Activated naive CD4-positive, alpha-beta T cell treated with anti-CD3 and anti-CD28 coated beads, Interleukin-2, amount 10 ng/mL, durations not matched to agents 7 days and 5 days (primary cell): ENCODE measurements at regions of chr4 and their contacts with region 1.

Region 1: GRCh38 chr4:86895692-86896488 is 3.7 kb upstream of the C4orf36 start:
- DNase-seq: no peak
- H3K4me3 Mint-ChIP-seq: no peak overlapping the region
- H3K27ac Mint-ChIP-seq: no peak overlapping the region
- H3K4me1 Mint-ChIP-seq: peaks cover 10% of the 10 kb centered on the region
- H3K27me3 Mint-ChIP-seq: peaks cover 24% of the 10 kb centered on the region

Region 2: GRCh38 chr4:86497980-86498862 is 397.7 kb before region 1 on chr4:
- CTCF ChIA-PET with region 1: interaction called, 33 read pairs
- DNase-seq: no peak
- H3K4me3 Mint-ChIP-seq: no peak overlapping the region
- H3K27ac Mint-ChIP-seq: no peak overlapping the region
- H3K4me1 Mint-ChIP-seq: peaks cover 9% of the 10 kb centered on the region
- H3K27me3 Mint-ChIP-seq: peaks cover 4% of the 10 kb centered on the region

Region 3: DNA sequence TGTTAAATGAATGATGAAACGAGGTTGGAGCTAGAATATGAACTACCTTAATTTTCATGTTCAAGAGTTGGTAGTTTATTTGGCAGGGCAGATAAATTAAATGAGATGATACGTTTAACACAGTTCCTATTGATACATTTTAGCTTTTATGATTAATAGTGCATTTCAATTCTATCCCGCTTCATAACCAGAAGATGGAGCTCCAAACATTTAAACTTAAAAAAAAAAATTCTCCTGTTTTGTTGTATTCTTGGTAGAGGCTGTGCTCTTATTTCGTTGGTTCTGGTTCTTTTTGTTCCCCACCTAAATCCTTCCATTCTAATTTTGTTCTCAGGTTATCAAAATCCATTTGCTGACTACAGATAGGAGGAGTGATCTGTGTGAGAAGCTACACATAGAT is 373.5 kb before region 1 on chr4:
- CTCF ChIA-PET with region 1: interaction called, 12 read pairs
- DNase-seq: no peak
- H3K4me3 Mint-ChIP-seq: no peak overlapping the region
- H3K27ac Mint-ChIP-seq: no peak overlapping the region
- H3K4me1 Mint-ChIP-seq: no peaks in the 10 kb centered on the region
- H3K27me3 Mint-ChIP-seq: peaks cover 19% of the 10 kb centered on the region

Region 4: DNA sequence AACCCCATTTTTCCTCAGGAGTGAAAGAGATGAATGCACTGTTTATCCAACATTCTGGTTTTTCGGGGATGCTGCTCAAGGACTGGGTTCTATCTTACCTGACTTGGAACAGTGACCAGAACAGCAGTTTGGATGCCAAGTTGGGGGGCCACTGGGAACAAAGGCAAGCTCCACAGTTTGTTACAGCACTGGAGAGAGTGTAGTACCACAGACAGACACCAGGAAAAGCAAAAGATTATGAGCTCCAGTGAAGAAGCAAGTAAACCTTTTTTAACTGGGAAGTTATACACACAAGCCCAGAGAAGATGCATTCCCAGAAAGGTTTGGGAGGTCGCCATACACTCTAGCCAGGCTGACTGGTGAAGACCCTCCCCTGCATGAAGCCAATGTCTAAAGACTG is 17.2 kb before region 1 on chr4:
- CTCF ChIA-PET with region 1: no interaction called
- DNase-seq: no peak
- H3K4me3 Mint-ChIP-seq: no peak overlapping the region
- H3K27ac Mint-ChIP-seq: no peak overlapping the region
- H3K4me1 Mint-ChIP-seq: no peaks in the 10 kb centered on the region
- H3K27me3 Mint-ChIP-seq: peaks cover 4% of the 10 kb centered on the region

Region 5: DNA sequence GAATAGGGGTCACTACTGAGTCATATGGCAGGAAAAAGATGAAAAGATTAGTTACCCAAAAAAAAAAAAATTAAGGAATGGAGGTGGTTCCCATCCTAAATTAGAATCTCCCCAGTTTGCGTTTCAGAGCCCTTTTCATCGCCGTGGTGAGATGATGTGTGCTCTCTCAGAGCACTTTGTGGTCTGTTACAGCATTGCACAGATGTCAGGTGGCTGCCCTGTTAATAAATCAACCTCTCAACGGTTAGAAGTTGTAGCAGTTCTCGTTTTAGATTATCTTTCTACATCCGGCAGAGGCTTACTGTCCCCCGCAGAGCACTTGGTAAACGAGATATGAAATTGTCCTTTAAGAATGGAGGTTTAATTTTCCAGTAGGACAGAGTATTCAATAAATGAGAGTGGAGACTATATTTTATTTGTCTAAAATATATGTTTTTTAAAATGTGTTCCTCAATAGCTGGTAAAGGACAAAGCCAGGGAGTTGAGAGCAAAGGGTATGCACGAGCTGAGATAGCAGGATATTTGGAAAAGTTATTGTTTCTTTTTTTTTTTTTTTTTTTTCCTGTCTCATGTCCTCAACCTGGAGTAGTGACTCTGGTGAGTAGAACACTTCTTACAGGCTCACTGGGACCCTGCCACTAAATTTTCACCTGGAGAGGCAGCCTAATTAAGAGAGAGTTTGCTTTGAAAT is 65.9 kb after region 1 on chr4:
- CTCF ChIA-PET with region 1: no interaction called
- DNase-seq: peak; percentile 21
- H3K4me3 Mint-ChIP-seq: no peak overlapping the region
- H3K27ac Mint-ChIP-seq: no peak overlapping the region
- H3K4me1 Mint-ChIP-seq: peaks cover 16% of the 10 kb centered on the region
- H3K27me3 Mint-ChIP-seq: no peaks in the 10 kb centered on the region